ENCODE measurements at regions of chr5 and their contacts with region 1.

Region 1: GRCh38 chr5:74581988-74582365 is 58.6 kb downstream of the ENC1 start:
- DNase-seq: no peak
- H3K4me3 ChIP-seq: no peak overlapping the region
- H3K4me3 Mint-ChIP-seq: peak overlapping the region; percentile 35
- H3K27ac Mint-ChIP-seq: peak overlapping the region; percentile 97
- H3K4me1 ChIP-seq: peaks cover 63% of the 10 kb centered on the region
- H3K4me1 Mint-ChIP-seq: peaks cover 39% of the 10 kb centered on the region
- H3K27me3 ChIP-seq: no peaks in the 10 kb centered on the region
- H3K27me3 Mint-ChIP-seq: no peaks in the 10 kb centered on the region
- CTCF ChIP-seq: no peak

Region 2: DNA sequence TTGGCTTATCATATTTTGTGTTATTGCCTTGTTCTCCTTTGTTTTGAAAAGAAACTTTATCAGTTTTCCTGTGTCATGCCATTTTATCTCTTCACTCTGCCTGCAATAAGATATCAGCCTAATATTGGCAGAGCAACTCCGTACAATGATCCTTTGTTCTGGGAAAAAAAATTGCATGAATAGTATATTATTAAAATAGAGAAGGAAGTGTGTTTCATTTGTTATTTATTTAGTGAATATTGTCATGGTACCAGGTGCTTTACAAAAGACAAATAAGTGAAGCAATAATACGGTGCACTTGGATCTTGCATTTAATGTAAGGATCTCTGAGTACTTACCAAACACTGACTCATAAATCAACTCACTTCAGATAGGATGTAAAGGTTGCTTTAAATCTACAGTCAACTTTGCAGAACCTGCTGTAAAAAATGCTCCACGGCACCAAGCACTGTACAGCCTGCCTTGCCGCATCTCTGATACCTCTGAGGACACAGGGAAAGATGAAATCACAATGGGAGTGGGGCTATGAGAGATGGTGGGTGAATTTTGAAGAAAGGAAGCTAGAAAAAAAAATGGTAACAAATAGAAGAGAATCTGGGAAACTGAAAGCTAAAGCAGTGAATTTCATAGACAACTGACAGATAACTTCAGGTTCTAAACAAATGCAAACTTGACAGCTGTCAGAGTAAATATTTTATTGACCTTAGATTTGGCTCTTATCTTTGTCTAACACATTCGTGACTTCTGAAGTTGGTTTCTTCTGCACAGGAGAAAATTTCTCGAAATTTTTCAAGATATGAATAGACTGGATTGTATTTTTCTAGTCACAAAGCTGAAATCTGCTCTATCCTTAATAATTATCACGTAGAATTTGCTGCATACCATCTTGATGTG is 173.6 kb before region 1 on chr5:
- CTCF ChIA-PET with region 1: no interaction called
- POLR2A ChIA-PET with region 1: no interaction called
- intact Hi-C with region 1: loop called (anchors 1 kb)
- DNase-seq: peak; percentile 53 to 59
- H3K4me3 ChIP-seq: no peak overlapping the region
- H3K4me3 Mint-ChIP-seq: peak overlapping the region; percentile 61
- H3K27ac Mint-ChIP-seq: peak overlapping the region; percentile 19
- H3K4me1 ChIP-seq: peaks cover 73% of the 10 kb centered on the region
- H3K4me1 Mint-ChIP-seq: peaks cover 37% of the 10 kb centered on the region
- H3K27me3 ChIP-seq: no peaks in the 10 kb centered on the region
- H3K27me3 Mint-ChIP-seq: no peaks in the 10 kb centered on the region
- CTCF ChIP-seq: no peak

Region 3: GRCh38 chr5:74500110-74500917 is 81.7 kb before region 1 on chr5:
- CTCF ChIA-PET with region 1: no interaction called
- POLR2A ChIA-PET with region 1: no interaction called
- intact Hi-C with region 1: loop called (anchors 5 kb)
- DNase-seq: no peak
- H3K4me3 ChIP-seq: no peak overlapping the region
- H3K4me3 Mint-ChIP-seq: peak overlapping the region; percentile 7
- H3K27ac Mint-ChIP-seq: peak overlapping the region; percentile 64
- H3K4me1 ChIP-seq: peaks cover 46% of the 10 kb centered on the region
- H3K4me1 Mint-ChIP-seq: peaks cover 44% of the 10 kb centered on the region
- H3K27me3 ChIP-seq: no peaks in the 10 kb centered on the region
- H3K27me3 Mint-ChIP-seq: no peaks in the 10 kb centered on the region
- CTCF ChIP-seq: no peak

Region 4: GRCh38 chr5:74595143-74595925 is 13.4 kb after region 1 on chr5:
- CTCF ChIA-PET with region 1: interaction called, 4 read pairs
- POLR2A ChIA-PET with region 1: interaction called, 7 read pairs
- intact Hi-C with region 1: loop called (anchors 1 kb)
- DNase-seq: peak; percentile 82 to 89
- H3K4me3 ChIP-seq: no peak overlapping the region
- H3K4me3 Mint-ChIP-seq: peak overlapping the region; percentile 19
- H3K27ac Mint-ChIP-seq: peak overlapping the region; percentile 92
- H3K4me1 ChIP-seq: peaks cover 41% of the 10 kb centered on the region
- H3K4me1 Mint-ChIP-seq: peaks cover 46% of the 10 kb centered on the region
- H3K27me3 ChIP-seq: no peaks in the 10 kb centered on the region
- H3K27me3 Mint-ChIP-seq: no peaks in the 10 kb centered on the region
- CTCF ChIP-seq: no peak

Region 5: GRCh38 chr5:74632947-74633356 is 51.0 kb after region 1 on chr5:
- CTCF ChIA-PET with region 1: no interaction called
- POLR2A ChIA-PET with region 1: no interaction called
- intact Hi-C with region 1: loop called (anchors 1 kb)
- DNase-seq: peak in 1 of 2 experiments; percentile 62
- H3K4me3 ChIP-seq: no peak overlapping the region
- H3K4me3 Mint-ChIP-seq: no peak overlapping the region
- H3K27ac Mint-ChIP-seq: peak overlapping the region; percentile 91
- H3K4me1 ChIP-seq: peaks cover 74% of the 10 kb centered on the region
- H3K4me1 Mint-ChIP-seq: peaks cover 65% of the 10 kb centered on the region
- H3K27me3 ChIP-seq: no peaks in the 10 kb centered on the region
- H3K27me3 Mint-ChIP-seq: no peaks in the 10 kb centered on the region
- CTCF ChIP-seq: no peak